Activated B cell treated with CpG ODN at 0.5 μM for 24 hours (primary cell): ENCODE measurements at regions of chr4 and their contacts with region 1.

Region 1: DNA sequence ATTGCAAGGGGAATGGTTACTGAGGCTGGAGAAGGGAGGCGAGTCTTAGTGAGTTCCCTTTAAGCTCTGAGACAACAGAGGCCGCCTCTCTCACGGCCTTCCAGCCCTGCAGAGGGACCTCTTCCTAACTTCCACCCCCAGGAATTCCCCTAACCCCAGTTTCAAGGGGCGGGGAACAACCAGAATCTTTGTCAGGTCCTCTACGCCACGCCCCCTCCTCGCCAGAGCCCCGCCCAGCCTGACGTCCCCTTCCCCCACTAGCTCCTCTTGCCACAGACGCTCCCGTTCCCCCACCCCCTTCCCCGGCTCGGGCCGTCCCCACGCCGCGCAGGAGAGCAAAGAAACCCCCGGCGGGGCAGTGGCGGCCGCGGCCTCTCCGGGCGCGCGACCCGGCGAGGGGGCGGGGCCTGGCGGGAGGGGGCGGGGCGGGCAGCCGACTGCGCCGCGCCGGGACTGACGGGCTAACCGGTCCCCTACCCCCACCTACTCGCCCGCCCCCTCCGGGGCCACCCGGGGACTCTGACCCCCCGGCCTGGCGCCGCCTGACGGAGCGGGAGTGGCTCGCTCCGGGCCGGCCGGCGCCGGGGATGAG is 12.3 kb upstream of the TMEM156 start:
- DNase-seq: peak; percentile 96
- ATAC-seq: peak; percentile 86
- H3K4me3 Mint-ChIP-seq: peak overlapping the region; percentile 86
- H3K27ac Mint-ChIP-seq: peak overlapping the region; percentile 88
- H3K4me1 Mint-ChIP-seq: peaks cover 62% of the 10 kb centered on the region
- H3K27me3 Mint-ChIP-seq: no peaks in the 10 kb centered on the region
- CTCF ChIP-seq: no peak

Region 2: GRCh38 chr4:38675146-38676121 is 369.0 kb before region 1 on chr4:
- CTCF ChIA-PET with region 1: no interaction called
- POLR2A ChIA-PET with region 1: no interaction called
- intact Hi-C with region 1: no loop called
- DNase-seq: peak; percentile 56
- ATAC-seq: peak; percentile 75
- H3K4me3 Mint-ChIP-seq: peak overlapping the region; percentile 53
- H3K27ac Mint-ChIP-seq: peak overlapping the region; percentile 46
- H3K4me1 Mint-ChIP-seq: peaks cover 66% of the 10 kb centered on the region
- H3K27me3 Mint-ChIP-seq: no peaks in the 10 kb centered on the region
- CTCF ChIP-seq: peak; percentile 21

Region 3: GRCh38 chr4:38804654-38805295 is 239.7 kb before region 1 on chr4 and contains the start of gene TLR1:
- CTCF ChIA-PET with region 1: interaction called, 4 read pairs
- POLR2A ChIA-PET with region 1: interaction called, 7 read pairs
- intact Hi-C with region 1: loop called (anchors 1 kb)
- DNase-seq: no peak
- ATAC-seq: peak; percentile 45
- H3K4me3 Mint-ChIP-seq: peak within 1 kb of the TSS; percentile 86
- H3K27ac Mint-ChIP-seq: peak within 1 kb of the TSS; percentile 93
- H3K4me1 Mint-ChIP-seq: peaks cover 68% of the 10 kb centered on the region
- H3K27me3 Mint-ChIP-seq: no peaks in the 10 kb centered on the region
- CTCF ChIP-seq: peak; percentile 54
- total RNA-seq, gene TLR1: 39.6 and 43.0 TPM in 2 replicates

Region 4: GRCh38 chr4:38983787-38984598 is 60.5 kb before region 1 on chr4:
- CTCF ChIA-PET with region 1: interaction called, 6 read pairs
- POLR2A ChIA-PET with region 1: interaction called, 73 read pairs
- intact Hi-C with region 1: loop called (anchors 2 kb)
- DNase-seq: no peak
- ATAC-seq: no peak
- H3K4me3 Mint-ChIP-seq: no peak overlapping the region
- H3K27ac Mint-ChIP-seq: peak overlapping the region; percentile 25
- H3K4me1 Mint-ChIP-seq: peaks cover 53% of the 10 kb centered on the region
- H3K27me3 Mint-ChIP-seq: no peaks in the 10 kb centered on the region
- CTCF ChIP-seq: no peak

Region 5: GRCh38 chr4:39014028-39014427 is 30.4 kb before region 1 on chr4:
- CTCF ChIA-PET with region 1: no interaction called
- POLR2A ChIA-PET with region 1: interaction called, 16 read pairs
- intact Hi-C with region 1: loop called (anchors 2 kb)
- DNase-seq: no peak
- ATAC-seq: no peak
- H3K4me3 Mint-ChIP-seq: no peak overlapping the region
- H3K27ac Mint-ChIP-seq: no peak overlapping the region
- H3K4me1 Mint-ChIP-seq: peaks cover 47% of the 10 kb centered on the region
- H3K27me3 Mint-ChIP-seq: no peaks in the 10 kb centered on the region
- CTCF ChIP-seq: no peak

Region 6: DNA sequence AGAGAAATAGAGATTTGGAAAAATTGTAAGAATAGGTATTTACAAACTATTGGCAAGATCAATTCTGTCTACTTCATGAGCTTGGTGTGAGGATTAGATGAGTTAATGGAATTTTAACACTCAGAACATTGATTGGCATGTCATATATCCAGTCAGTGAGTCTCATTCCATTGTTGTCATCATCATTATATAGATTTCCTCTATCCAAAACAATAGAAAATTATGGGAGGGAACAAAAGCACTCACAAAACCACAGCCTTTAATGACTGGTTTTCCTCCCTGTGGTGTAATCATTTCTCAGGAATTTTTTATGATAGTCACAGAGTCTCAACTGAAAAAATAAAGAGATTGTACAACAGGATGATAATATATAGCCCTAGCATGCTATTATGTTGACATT is 38.7 kb after region 1 on chr4:
- CTCF ChIA-PET with region 1: no interaction called
- POLR2A ChIA-PET with region 1: no interaction called
- intact Hi-C with region 1: loop called (anchors 5 kb)
- DNase-seq: no peak
- ATAC-seq: no peak
- H3K4me3 Mint-ChIP-seq: no peak overlapping the region
- H3K27ac Mint-ChIP-seq: no peak overlapping the region
- H3K4me1 Mint-ChIP-seq: no peaks in the 10 kb centered on the region
- H3K27me3 Mint-ChIP-seq: no peaks in the 10 kb centered on the region
- CTCF ChIP-seq: no peak

Region 7: GRCh38 chr4:39134683-39135319 is 90.3 kb after region 1 on chr4:
- CTCF ChIA-PET with region 1: interaction called, 3 read pairs
- POLR2A ChIA-PET with region 1: interaction called, 3 read pairs
- intact Hi-C with region 1: loop called (anchors 2 kb)
- DNase-seq: no peak
- ATAC-seq: no peak
- H3K4me3 Mint-ChIP-seq: no peak overlapping the region
- H3K27ac Mint-ChIP-seq: peak overlapping the region; percentile 4
- H3K4me1 Mint-ChIP-seq: peaks cover 12% of the 10 kb centered on the region
- H3K27me3 Mint-ChIP-seq: no peaks in the 10 kb centered on the region
- CTCF ChIP-seq: no peak

Region 8: DNA sequence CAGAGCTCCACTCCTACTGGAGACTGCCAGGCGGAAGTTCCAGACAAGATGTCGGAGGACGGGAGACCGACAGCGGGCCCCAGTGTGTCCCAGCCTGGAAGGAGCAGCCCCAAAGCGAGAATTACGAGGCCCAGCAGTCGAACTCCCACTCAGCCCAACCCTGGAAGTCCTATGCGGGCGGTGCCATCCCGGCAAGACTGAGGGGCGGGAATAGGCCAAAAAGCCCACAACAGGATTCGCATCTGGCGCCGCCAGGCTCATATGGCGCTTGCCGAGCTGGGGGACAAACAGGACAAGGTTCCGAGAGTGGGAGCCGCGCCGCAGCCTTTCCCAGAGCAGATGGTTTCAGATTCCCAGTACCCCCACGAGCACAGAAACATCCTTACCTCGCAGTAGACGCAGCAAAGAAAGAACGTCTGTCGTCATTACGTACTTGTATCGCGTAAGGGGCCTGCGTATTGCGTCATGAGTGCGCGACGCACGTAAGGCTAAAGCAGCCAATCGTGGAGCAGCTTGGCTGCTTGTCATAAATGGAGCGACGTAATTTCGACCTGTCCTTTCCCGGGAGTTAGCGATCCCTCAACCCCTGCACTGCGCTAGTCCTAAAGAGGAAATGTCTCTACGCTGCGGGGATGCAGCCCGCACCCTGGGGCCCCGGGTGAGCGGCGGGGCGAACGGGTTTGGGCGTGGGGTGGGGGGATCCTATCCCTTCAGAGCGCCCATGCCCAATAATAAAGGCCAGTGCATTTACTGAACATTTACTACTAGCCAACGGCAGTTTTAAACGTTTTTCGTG is 414.2 kb after region 1 on chr4 and contains the starts of genes LIAS and RPL9:
- CTCF ChIA-PET with region 1: no interaction called
- POLR2A ChIA-PET with region 1: no interaction called
- intact Hi-C with region 1: loop called (anchors 5 kb)
- DNase-seq: peak; percentile 90
- ATAC-seq: peak; percentile 81
- H3K4me3 Mint-ChIP-seq: peak within 1 kb of the TSS; percentile 97
- H3K27ac Mint-ChIP-seq: peak within 1 kb of the TSS; percentile 98
- H3K4me1 Mint-ChIP-seq: peaks cover 36% of the 10 kb centered on the region
- H3K27me3 Mint-ChIP-seq: no peaks in the 10 kb centered on the region
- CTCF ChIP-seq: no peak
- total RNA-seq, gene LIAS: 19.5 and 20.5 TPM in 2 replicates
- total RNA-seq, gene RPL9: 2,632 and 2,865 TPM in 2 replicates